Left cardiac atrium (tissue), 4 donors: ENCODE measurements at regions of chr17 and their contacts with region 1.

Region 1: GRCh38 chr17:2416010-2416734 is 15.3 kb upstream of the MNT start:
- DNase-seq: peak; percentile 88
- ATAC-seq: peak; percentile 69 to 78

Region 2: DNA sequence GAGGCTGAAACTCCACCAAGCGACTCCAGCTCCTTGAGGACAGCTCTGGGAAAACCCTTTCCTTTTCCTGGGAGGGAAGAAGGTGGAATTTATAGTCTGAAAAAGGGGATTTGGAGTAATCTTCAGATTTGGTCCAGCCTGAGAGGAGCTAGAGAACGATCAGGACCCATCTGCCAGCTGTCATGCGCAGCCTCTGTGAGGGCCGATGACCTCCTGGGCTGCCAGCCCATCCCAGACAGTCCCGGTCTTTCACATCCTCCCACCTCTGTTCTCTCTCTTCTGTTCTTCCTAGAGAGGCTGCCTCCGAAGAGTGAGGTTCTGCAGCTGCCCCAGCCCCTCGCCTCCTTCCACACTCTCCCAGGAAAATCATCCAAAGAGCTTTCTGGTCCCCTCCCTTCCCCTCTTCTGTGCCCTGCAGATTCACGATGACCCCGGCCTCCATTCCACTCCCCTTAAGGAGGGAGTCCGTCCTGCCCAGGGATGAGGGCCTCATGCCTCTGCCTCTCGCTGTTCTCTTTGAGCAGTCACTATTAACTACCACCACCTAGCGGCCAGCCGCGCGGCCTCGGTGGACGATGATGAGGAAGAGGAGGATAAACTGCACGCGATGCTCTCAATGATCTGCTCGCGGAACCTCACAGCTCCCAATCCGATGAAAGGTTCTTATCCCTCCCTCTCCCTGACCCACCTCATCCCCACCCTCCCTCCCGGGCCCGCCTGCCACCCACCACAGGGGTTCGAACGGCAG is 49.3 kb before region 1 on chr17:
- intact Hi-C with region 1: loop called in 1 of 2 experiments (anchors 10 kb)
- DNase-seq: no peak
- ATAC-seq: no peak

Region 3: GRCh38 chr17:2380226-2380922 is 35.8 kb before region 1 on chr17:
- intact Hi-C with region 1: loop called (anchors 1 to 5 kb)
- DNase-seq: no peak
- ATAC-seq: no peak

Region 4: DNA sequence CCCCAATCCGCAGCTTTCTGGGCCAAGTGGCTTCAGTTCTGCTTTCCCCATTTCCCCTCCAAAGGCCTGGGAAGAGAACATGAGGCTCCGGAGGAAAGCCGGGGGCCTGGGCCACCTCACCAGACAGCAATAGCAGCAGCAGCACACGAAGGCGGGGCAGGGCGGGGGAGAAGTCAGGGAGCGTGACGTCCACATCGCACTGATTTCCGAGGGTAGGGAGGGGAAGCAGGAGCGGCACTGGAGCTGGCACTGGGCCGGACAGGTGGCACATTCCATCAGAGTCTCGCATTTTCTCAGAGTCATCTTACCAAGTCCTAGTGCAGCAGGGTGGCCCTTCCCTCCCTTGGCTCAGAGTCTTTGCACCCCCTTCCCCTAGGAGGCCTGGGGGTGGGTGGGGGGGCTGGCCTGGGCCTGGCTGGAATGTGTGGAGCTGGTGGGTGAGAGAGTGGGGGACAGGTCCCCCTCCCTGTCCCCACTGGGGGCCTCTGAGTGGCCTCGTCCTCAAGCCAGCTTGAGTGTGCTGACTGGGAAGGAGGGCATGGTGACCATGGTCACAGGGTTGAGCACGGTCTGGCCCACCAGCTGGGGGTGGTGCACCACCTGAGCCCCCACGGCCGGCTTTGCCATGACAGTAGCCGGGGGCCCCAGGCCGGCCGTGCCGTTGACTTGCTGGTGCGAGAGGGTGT is 29.6 kb before region 1 on chr17:
- intact Hi-C with region 1: loop called (anchors 1 to 5 kb)
- DNase-seq: no peak
- ATAC-seq: no peak